ENCODE measurements at regions of chr15 and their contacts with region 1.

Region 1: DNA sequence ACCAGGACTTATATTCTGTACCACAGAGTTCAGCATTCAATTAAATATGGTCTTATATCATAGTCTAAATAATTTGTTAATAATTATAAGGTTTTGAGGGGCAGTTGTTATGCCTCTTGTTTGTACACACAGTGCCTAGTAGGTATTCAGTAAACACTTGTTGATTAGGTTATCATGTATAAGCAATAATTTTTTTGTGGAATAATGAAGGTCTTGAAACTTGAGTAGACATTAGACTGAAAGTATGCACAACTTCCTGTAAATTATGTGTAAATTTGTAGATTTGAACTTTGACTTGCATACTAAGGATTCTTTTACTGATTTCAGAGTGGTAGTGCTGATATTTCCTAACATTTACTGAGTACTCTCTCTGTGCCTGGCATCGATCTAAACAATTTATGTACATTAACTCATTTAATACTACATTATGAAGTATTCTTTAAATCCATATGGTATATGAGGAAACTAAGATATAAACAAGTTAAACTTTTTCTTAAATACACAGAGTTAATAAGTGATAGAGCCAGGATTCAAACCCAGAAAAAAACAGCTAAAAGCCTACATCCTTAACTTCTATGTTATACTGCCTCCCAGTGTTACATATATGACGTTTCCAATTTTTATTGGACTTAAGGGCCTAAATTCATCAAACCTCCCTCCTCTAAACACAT is 65.1 kb downstream of the GLCE start:
- DNase-seq: peak; percentile 38

Region 2: DNA sequence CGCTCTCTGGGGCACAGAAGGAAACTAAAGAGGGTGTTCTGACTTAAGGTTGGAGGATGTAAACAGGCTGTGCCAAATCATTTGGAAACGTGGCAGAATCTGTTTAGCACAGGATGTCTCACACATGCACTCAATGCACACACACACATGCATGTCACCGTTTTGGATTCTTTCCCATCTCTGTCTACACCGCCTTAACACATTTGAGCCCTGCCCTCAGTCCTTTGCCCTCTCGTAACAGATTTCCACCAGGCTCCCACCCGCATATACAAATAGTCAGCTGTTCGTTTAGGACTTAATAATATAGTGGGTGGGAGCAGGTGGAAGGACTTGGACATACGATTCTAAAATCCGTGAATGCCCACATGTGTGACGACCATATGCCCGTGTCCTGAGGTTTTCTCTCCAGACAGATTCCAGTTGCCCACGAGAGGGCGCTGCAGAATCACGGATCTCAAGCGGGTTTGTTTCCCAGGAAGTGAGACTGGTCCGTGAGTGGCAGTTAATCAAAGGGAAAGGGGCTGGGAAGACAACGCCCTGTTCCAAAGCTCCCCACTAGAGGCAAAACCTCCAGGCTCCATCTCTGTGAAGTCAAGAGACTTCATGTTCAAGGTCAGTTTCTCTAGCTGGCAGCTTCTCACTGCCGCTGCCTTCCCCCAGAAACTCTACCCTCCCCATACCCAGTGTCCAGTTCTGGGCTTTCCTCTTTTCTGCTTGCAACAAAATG is 166.5 kb before region 1 on chr15:
- in situ Hi-C with region 1: loop called (anchors 25 kb)
- DNase-seq: peak; percentile 81

Measured in Caki2 (cell line).